ENCODE measurements at regions of chr4 and their contacts with region 1.

Region 1: DNA sequence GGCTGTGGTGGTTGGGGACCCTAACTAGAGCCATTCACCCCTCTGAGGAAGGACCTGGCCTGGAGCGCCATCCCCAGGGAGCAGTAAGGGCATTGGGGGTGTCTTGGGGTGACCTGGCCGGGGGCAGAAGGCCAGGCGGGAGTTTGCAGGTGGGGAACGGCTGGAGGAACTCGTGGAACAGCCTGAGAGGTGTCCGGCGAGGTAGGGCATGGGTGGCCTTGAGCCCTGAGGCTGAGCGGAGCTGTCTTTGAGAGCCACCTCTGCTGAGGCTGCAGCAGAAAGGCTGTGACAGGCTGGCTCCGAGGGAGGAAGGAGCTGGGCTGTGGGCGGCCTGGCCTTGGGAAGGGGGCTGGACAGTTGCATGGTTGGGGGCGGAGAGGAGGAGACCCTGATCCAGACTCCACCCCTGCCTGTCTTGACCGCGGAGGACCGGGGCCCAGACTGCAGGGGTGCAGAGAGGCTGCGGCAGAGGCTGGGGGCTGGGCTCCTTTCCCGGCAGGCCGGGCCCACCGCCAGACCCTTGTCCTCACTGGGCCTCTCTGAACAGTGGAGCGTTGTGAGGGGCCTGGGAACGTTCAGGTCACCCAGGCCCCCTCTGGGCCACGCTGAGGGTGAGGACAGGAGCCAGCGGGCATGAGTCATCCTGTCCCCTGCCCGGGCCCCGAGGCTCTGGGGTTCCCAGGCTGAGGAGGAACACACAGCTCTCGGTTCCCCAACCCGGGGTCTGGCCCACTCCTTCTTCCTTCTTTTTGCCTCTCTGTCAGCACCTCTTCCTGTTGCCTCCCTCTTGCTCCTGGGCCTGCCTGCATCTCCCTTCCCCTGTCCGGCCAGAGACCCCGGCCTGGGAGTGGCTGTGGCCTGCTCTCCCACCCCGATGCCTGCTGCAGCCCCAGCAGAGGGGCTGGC is 8.1 kb downstream of the SH3BP2 start:
- DNase-seq: no peak
- H3K4me3 Mint-ChIP-seq: peak overlapping the region; percentile 65
- H3K27ac Mint-ChIP-seq: no peak overlapping the region
- H3K4me1 Mint-ChIP-seq: peaks cover 50% of the 10 kb centered on the region
- H3K27me3 Mint-ChIP-seq: no peaks in the 10 kb centered on the region

Region 2: DNA sequence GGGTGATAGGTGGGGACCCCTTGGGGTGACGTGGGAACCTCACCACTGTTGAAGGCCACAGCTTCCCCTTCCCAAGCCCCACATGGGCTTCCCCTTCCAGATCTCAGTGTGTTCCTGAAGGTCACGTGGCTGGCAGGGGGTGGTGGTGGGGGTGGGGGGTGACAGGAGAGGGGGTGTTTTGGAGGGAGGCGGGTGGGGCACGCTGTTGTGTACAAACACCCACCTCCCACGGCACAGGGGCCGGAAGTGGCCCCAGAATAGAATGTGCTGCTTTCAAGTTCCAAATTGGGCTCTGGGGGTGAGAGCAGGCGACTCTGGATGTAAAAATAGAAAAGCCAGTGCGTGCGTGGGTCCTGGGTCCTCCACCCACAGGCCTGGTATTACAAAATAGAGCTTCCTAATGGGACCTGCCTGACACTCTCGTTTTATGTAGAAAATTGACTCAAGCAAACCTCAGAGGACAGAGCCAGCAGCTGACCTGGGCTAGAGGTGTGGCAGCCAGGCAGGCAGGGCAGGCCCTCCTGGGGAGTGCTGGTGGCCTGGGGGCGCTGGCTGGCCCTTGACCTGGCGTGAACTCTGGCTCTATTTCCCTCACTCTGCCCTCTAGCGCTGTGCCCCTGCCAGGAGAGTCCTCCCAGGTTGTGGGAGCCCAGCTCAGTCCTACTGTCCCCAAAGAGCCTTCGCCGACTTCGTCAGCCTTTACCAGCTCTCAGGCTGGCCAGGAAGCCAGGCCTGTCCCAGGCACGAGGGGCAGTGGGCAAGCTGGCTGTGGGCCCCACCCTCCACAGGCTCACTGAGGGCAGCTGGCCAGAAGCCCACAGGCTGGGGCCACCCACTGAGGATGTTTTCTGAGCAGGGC is 13.5 kb before region 1 on chr4:
- CTCF ChIA-PET with region 1: interaction called, 3 read pairs
- POLR2A ChIA-PET with region 1: interaction called, 16 read pairs
- DNase-seq: peak; percentile 40
- H3K4me3 Mint-ChIP-seq: no peak overlapping the region
- H3K27ac Mint-ChIP-seq: peak overlapping the region; percentile 72
- H3K4me1 Mint-ChIP-seq: peaks cover 27% of the 10 kb centered on the region
- H3K27me3 Mint-ChIP-seq: peaks cover 8% of the 10 kb centered on the region

Region 3: GRCh38 chr4:2837904-2838496 is 37.1 kb after region 1 on chr4:
- CTCF ChIA-PET with region 1: no interaction called
- POLR2A ChIA-PET with region 1: interaction called, 10 read pairs
- DNase-seq: peak; percentile 84
- H3K4me3 Mint-ChIP-seq: peak overlapping the region; percentile 75
- H3K27ac Mint-ChIP-seq: peak overlapping the region; percentile 93
- H3K4me1 Mint-ChIP-seq: peaks cover 75% of the 10 kb centered on the region
- H3K27me3 Mint-ChIP-seq: no peaks in the 10 kb centered on the region

Measured in activated CD4-positive, alpha-beta memory T cell treated with anti-CD3 and anti-CD28 coated beads, Interleukin-2, amount 10 ng/mL, durations not matched to agents 7 days and 5 days (primary cell).